HEK293 (cell line): ENCODE measurements at regions of chr14 and their contacts with region 1.

Region 1: DNA sequence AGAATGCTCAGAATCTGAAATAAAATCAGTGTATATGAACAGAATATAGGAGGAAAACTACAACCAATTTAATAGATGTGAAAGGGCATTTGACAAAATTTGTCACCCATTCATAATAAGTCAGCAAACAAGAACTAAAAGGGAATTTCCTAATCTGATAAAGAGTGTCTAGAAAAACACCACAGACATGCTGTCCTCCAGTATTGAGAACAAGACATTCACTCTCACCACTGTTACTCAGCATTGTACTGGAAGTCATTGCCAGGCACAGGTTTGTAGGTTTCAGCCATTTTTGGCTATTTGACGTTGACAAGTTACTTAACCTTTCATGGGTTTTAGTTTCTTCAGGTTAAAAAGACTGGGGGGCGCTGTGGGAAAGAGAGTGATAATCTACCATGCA is 13.2 kb downstream of the EIF2S1 start:
- H3K4me3 ChIP-seq: no peak overlapping the region
- H3K27ac ChIP-seq: no peak overlapping the region
- H3K4me1 ChIP-seq: no peaks in the 10 kb centered on the region
- CTCF ChIP-seq: no peak

Region 2: GRCh38 chr14:67276131-67276530 is 97.2 kb before region 1 on chr14:
- CTCF ChIA-PET with region 1: no interaction called
- POLR2A ChIA-PET with region 1: no interaction called
- H3K4me3 ChIP-seq: no peak overlapping the region
- H3K27ac ChIP-seq: no peak overlapping the region
- H3K4me1 ChIP-seq: no peaks in the 10 kb centered on the region; the same call in 1 of the 2 replicates
- CTCF ChIP-seq: no peak

Region 3: GRCh38 chr14:67359775-67360648 is 13.3 kb before region 1 on chr14 and contains the starts of genes ATP6V1D and EIF2S1:
- CTCF ChIA-PET with region 1: interaction called, 11 read pairs
- POLR2A ChIA-PET with region 1: interaction called, 7 read pairs
- H3K4me3 ChIP-seq: peak within 1 kb of the TSS; percentile 97
- H3K27ac ChIP-seq: peak within 1 kb of the TSS; percentile 88
- H3K4me1 ChIP-seq: peaks cover 11% of the 10 kb centered on the region
- CTCF ChIP-seq: peak; percentile 97

Region 4: GRCh38 chr14:67392132-67392531 is 18.8 kb after region 1 on chr14:
- CTCF ChIA-PET with region 1: interaction called, 3 read pairs
- POLR2A ChIA-PET with region 1: interaction called, 11 read pairs
- H3K4me3 ChIP-seq: no peak overlapping the region
- H3K27ac ChIP-seq: no peak overlapping the region
- H3K4me1 ChIP-seq: no peaks in the 10 kb centered on the region
- CTCF ChIP-seq: no peak